K562 (cell line): ENCODE measurements at regions of chr6 and their contacts with region 1.

Region 1: GRCh38 chr6:150813319-150813992 is 52.0 kb upstream of the MTHFD1L start:
- DNase-seq: no peak
- ATAC-seq: no peak
- H3K4me3 ChIP-seq: no peak overlapping the region
- H3K27ac ChIP-seq: no peak overlapping the region
- H3K4me1 ChIP-seq: no peaks in the 10 kb centered on the region; a peak in 1 of 5 replicates
- H3K27me3 ChIP-seq: peaks cover 25 to 37% of the 10 kb centered on the region in 2 experiments; a peak in 4 of 5 replicates
- CTCF ChIP-seq: no peak
- EP300 ChIP-seq: no peak
- POLR2A ChIP-seq: no peak
- RAD21 ChIP-seq: no peak

Region 2: GRCh38 chr6:150004783-150005717 is 808.4 kb before region 1 on chr6:
- CTCF ChIA-PET with region 1: no interaction called
- POLR2A ChIA-PET with region 1: no interaction called
- in situ Hi-C with region 1: no loop called
- intact Hi-C with region 1: loop called (anchors 10 kb)
- DNase-seq: peak; percentile 97 to 99 (median 99)
- ATAC-seq: peak; percentile 97
- H3K4me3 ChIP-seq: peak overlapping the region; percentile 52
- H3K27ac ChIP-seq: peak overlapping the region; percentile 40
- H3K4me1 ChIP-seq: peaks cover 10 to 32% of the 10 kb centered on the region in 2 experiments
- H3K27me3 ChIP-seq: peaks cover 0 to 14% of the 10 kb centered on the region in 2 experiments; a peak in 2 of 5 replicates
- CTCF ChIP-seq: no peak
- EP300 ChIP-seq: no peak
- POLR2A ChIP-seq: peak; percentile 71
- RAD21 ChIP-seq: no peak

Region 3: GRCh38 chr6:150417899-150418826 is 395.3 kb before region 1 on chr6:
- CTCF ChIA-PET with region 1: interaction called, 32 read pairs
- POLR2A ChIA-PET with region 1: interaction called, 3 read pairs
- in situ Hi-C with region 1: loop called (anchors 5 kb)
- intact Hi-C with region 1: loop called (anchors 1 kb)
- DNase-seq: peak in 3 of 4 experiments; percentile 34 to 68 (median 60)
- ATAC-seq: peak; percentile 93
- H3K4me3 ChIP-seq: 0 out of 2 replicates have a peak overlapping the region, but pooled peaks have one; percentile 3
- H3K27ac ChIP-seq: no peak overlapping the region
- H3K4me1 ChIP-seq: peaks cover 4 to 9% of the 10 kb centered on the region in 2 experiments; a peak in 3 of 5 replicates
- H3K27me3 ChIP-seq: peaks cover 0 to 8% of the 10 kb centered on the region in 2 experiments; a peak in 2 of 5 replicates
- CTCF ChIP-seq: peak; percentile 73 to 91 (median 80)
- EP300 ChIP-seq: peak; percentile 38
- POLR2A ChIP-seq: no peak
- RAD21 ChIP-seq: peak; percentile 86 to 91

Region 4: DNA sequence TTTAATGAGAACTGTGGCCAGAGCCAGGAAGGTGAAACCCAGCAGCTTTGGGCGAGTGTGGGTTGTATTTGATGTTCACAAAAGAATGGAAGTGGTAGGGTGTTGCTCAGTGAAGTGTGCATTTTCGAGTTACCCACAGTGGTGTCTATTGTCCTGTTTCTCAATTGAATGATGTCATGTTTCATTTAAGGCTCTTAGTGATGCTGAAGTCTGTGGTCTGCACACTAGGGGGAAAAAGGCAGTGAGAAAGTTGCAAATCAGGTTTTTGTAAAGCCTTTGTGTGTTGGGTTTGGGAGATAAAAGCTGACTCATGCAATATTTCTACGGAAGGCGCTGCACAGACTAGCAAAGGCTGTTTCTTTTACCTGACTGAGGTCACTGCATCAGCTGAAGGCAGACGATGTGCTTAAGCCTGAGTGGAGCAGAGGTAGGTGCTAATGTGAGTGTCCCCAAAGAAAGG is 92.7 kb before region 1 on chr6:
- CTCF ChIA-PET with region 1: no interaction called
- POLR2A ChIA-PET with region 1: no interaction called
- in situ Hi-C with region 1: no loop called
- intact Hi-C with region 1: no loop called
- DNase-seq: no peak
- ATAC-seq: peak; percentile 68
- H3K4me3 ChIP-seq: no peak overlapping the region
- H3K27ac ChIP-seq: no peak overlapping the region
- H3K4me1 ChIP-seq: no peaks in the 10 kb centered on the region
- H3K27me3 ChIP-seq: peaks cover 15 to 43% of the 10 kb centered on the region in 2 experiments; a peak in 3 of 5 replicates
- CTCF ChIP-seq: no peak
- EP300 ChIP-seq: no peak
- POLR2A ChIP-seq: no peak
- RAD21 ChIP-seq: no peak

Region 5: DNA sequence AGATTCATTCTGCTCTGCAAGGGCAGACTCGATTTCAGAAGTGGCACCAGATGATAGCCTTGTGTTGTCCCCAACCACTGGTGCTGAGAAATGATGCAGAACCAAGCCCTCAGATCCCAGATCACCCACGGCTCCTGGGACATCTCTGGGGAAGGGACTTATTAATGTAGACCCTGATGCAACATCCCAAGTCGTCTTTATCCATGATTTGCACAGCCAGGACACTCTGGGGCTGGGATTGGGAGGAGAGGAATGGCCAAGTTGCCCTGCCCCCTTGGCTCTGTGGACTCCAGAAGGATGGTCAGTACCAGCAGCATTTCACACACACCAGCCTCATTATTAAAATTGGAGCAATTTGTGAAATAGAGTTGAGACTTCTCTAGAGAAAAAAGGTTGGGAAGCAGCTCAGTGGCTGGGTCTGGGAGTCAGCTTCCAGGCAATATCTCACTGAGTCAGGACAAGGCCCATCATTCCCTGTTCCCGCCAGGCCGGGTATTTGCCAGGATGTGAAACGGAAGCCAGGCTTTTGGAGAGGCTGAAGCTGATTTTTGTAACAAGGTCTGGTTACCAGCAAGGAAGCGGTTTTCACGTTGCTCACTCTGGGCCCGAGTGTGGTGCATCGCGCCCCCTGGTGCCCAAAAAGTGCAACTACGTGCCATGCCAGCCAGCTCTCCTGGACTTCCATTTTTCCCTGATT is 510.5 kb after region 1 on chr6:
- CTCF ChIA-PET with region 1: interaction called, 3 read pairs
- POLR2A ChIA-PET with region 1: no interaction called
- in situ Hi-C with region 1: no loop called
- intact Hi-C with region 1: loop called (anchors 2 kb)
- DNase-seq: peak; percentile 73 to 85 (median 82)
- ATAC-seq: peak; percentile 95
- H3K4me3 ChIP-seq: no peak overlapping the region
- H3K27ac ChIP-seq: no peak overlapping the region
- H3K4me1 ChIP-seq: peaks cover 0 to 6% of the 10 kb centered on the region in 2 experiments; a peak in 2 of 5 replicates
- H3K27me3 ChIP-seq: peaks cover 37 to 51% of the 10 kb centered on the region in 2 experiments
- CTCF ChIP-seq: peak; percentile 91 to 98 (median 96)
- EP300 ChIP-seq: no peak
- POLR2A ChIP-seq: no peak
- RAD21 ChIP-seq: peak; percentile 94 to 98

Region 6: DNA sequence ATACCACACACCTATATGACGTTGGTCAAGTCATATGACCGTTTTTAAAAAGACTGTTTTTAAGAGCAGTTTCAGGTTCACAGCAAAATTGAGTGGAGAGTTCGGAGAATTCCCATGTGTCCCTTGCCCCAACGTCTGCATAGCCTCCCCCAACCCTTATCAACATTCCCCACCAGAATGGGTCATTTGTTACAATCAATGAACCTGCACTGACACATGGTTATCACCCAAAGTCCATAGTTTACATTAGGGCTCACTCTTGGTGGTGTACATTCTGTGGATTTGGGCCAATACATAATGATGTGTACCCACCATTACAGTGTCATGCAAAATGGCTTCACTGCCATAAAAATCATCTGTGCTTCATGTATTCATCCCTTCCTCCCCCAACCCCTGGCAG is 525.9 kb after region 1 on chr6:
- CTCF ChIA-PET with region 1: interaction called, 9 read pairs
- POLR2A ChIA-PET with region 1: no interaction called
- in situ Hi-C with region 1: loop called (anchors 5 kb)
- intact Hi-C with region 1: loop called (anchors 2 kb)
- DNase-seq: peak in 1 of 4 experiments; percentile 36
- ATAC-seq: no peak; the same call in 1 of the 3 replicates
- H3K4me3 ChIP-seq: no peak overlapping the region
- H3K27ac ChIP-seq: no peak overlapping the region
- H3K4me1 ChIP-seq: peaks cover 0 to 12% of the 10 kb centered on the region in 2 experiments; a peak in 1 of 5 replicates
- H3K27me3 ChIP-seq: peaks cover 38 to 59% of the 10 kb centered on the region in 2 experiments
- CTCF ChIP-seq: no peak
- EP300 ChIP-seq: no peak
- POLR2A ChIP-seq: no peak
- RAD21 ChIP-seq: no peak